B cell (primary cell): ENCODE measurements at regions of chr10 and their contacts with region 1.

Region 1: DNA sequence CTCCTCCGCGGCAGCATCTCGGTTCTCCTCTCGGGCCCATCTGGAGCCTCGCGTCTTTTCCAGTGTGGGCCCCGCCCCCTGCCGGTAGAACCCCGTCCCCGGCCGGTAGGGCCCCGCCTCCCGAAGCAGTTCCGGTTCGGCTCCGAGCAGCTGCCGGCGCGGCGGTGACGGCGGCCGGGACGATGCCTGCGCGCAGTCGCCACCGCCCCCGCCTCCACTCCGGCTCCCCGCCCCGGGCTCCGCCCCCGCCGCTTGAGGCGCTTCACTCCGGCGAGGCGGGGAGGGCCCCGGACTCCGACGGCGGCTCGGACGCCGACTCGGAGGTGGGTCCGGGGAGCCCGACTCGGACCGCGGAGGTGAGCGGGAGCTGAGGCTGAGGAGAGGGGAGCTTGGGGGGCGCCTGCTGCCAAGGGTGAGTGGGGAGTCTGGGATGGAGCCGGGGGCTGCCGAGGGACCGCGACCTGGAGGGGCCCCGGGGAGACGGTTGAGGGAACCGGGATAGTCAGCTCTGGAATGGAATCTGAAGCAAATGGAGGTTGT is at the start of gene SAMD8:
- DNase-seq: peak; percentile 98
- ATAC-seq: peak; percentile 84
- H3K4me3 ChIP-seq: peak within 1 kb of the TSS; percentile 73 to 100 (median 91)
- H3K4me3 Mint-ChIP-seq: peak within 1 kb of the TSS; percentile 89
- H3K27ac ChIP-seq: peak within 1 kb of the TSS; percentile 98
- H3K27ac Mint-ChIP-seq: peak within 1 kb of the TSS; percentile 90
- H3K4me1 ChIP-seq: peaks cover 18 to 24% of the 10 kb centered on the region in 2 donors
- H3K4me1 Mint-ChIP-seq: peaks cover 44% of the 10 kb centered on the region
- H3K27me3 ChIP-seq: no peaks in the 10 kb centered on the region
- H3K27me3 Mint-ChIP-seq: no peaks in the 10 kb centered on the region
- CTCF ChIP-seq: peak; percentile 34
- total RNA-seq, gene SAMD8: 31.7 and 35.7 TPM in 2 replicates

Region 2: DNA sequence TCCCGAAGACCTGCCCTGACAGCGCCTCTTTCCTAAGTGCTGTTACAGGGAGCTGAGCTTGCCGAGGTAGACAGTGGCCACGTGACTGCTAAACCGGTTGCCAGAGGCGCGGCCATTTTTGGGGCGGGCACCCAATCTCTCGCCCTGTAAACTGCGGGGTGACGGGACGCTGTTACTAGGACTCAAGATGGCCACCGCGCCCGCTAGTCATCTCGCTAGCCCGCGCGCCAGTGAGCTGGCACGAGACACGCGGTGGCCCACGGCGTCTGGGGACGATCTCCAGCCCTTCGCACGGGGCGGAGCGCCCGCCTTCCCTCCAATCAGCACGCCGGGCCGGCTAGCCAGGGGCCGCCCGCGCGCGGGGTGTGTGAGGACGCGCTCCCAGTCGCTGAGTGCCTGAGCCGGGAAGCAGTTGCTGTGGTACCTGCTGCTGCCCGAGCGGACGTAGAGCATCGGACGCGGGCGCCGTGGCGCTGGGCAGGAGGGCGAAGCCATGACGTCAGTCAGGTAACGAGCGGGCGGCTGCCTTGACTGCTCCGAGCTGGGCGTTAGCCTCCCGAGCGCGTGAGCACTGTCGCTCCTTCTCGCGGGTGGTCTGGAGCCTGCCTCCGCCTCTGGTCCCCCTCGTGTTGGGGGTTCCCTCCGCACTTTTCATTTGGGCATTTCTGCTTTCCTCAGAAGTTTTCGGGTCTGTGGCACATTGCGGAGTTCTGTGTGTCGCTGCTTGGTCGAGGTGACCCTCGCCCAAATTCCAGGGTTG is 934.9 kb before region 1 on chr10:
- CTCF ChIA-PET with region 1: no interaction called
- POLR2A ChIA-PET with region 1: no interaction called
- intact Hi-C with region 1: loop called (anchors 1 kb)
- DNase-seq: peak; percentile 98
- ATAC-seq: peak; percentile 90
- H3K4me3 ChIP-seq: peak overlapping the region; percentile 85 to 96 (median 95)
- H3K4me3 Mint-ChIP-seq: peak overlapping the region; percentile 97
- H3K27ac ChIP-seq: peak overlapping the region; percentile 92 to 95
- H3K27ac Mint-ChIP-seq: peak overlapping the region; percentile 98
- H3K4me1 ChIP-seq: peaks cover 39 to 56% of the 10 kb centered on the region in 2 donors
- H3K4me1 Mint-ChIP-seq: peaks cover 55% of the 10 kb centered on the region
- H3K27me3 ChIP-seq: no peaks in the 10 kb centered on the region
- H3K27me3 Mint-ChIP-seq: no peaks in the 10 kb centered on the region
- CTCF ChIP-seq: no peak

Region 3: GRCh38 chr10:75079436-75080083 is 31.9 kb before region 1 on chr10:
- CTCF ChIA-PET with region 1: no interaction called
- POLR2A ChIA-PET with region 1: no interaction called
- intact Hi-C with region 1: no loop called
- DNase-seq: no peak
- ATAC-seq: no peak
- H3K4me3 ChIP-seq: no peak overlapping the region
- H3K4me3 Mint-ChIP-seq: no peak overlapping the region
- H3K27ac ChIP-seq: no peak overlapping the region
- H3K27ac Mint-ChIP-seq: no peak overlapping the region
- H3K4me1 ChIP-seq: no peaks in the 10 kb centered on the region
- H3K4me1 Mint-ChIP-seq: no peaks in the 10 kb centered on the region
- H3K27me3 ChIP-seq: no peaks in the 10 kb centered on the region
- H3K27me3 Mint-ChIP-seq: no peaks in the 10 kb centered on the region
- CTCF ChIP-seq: no peak

Region 4: DNA sequence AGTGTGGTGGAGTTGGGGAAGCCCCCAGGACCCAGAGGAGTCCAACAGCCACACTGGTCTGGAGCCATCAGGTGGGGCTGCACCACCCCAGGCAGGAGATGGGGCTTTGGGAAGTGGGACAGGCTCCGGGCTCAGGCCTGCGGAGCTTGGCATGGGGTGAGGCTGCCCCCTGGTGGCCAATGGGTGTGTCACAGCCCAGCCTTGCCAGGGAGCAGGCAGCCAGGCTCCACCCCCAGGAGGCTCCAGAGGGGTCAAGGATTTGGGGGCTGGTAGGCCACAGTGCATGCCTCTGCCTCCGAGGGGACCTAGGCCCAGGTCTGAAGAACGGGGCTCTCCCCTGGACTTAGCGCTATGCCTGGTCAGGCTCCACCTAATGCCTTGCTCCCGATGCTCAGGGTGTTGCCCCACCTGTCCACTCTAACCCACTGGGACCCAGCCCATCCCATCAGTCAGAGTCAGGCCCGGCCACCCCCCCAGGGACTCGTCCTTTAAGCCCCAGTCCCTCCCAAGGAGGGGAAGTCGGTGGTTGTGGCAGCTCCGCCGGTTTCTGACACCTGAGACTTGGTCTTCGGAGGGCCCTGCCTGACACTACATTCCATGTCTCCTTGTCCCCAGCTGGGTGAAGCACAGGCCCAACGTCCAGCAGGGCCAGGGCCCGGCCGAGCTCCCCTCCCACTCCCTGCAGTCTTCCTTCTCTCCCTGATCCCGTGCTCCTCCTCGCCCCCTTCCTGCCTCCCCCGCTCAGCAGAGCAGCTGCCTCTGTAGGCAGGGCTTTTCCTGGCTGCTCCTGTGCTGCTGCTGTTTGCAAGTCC is 11.3 kb before region 1 on chr10:
- CTCF ChIA-PET with region 1: interaction called, 10 read pairs
- POLR2A ChIA-PET with region 1: no interaction called
- intact Hi-C with region 1: no loop called
- DNase-seq: peak; percentile 83
- ATAC-seq: peak; percentile 98
- H3K4me3 ChIP-seq: no peak overlapping the region
- H3K4me3 Mint-ChIP-seq: no peak overlapping the region
- H3K27ac ChIP-seq: no peak overlapping the region
- H3K27ac Mint-ChIP-seq: no peak overlapping the region
- H3K4me1 ChIP-seq: peaks cover 0 to 7% of the 10 kb centered on the region in 2 donors
- H3K4me1 Mint-ChIP-seq: no peaks in the 10 kb centered on the region
- H3K27me3 ChIP-seq: no peaks in the 10 kb centered on the region
- H3K27me3 Mint-ChIP-seq: no peaks in the 10 kb centered on the region
- CTCF ChIP-seq: peak; percentile 100

Region 5: DNA sequence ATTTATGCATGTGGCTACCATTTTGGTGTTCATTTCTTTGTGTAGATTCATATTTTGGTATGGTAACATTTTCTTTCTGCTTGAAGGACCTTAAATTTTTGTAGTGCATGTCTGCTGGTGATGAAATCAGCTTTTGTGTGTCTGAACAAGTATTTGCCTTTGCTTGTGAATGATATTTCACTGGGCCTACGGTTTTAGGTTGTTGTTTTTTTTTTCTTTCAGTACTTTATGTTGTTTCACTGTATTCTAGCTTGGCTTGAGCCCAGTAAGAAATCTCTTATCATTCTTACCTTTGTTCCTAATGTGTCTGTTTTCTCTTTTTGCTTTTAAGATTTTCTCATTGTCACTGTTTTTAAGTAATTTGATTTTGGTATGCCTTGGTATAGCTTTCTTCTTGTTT is 31.9 kb after region 1 on chr10:
- CTCF ChIA-PET with region 1: no interaction called
- POLR2A ChIA-PET with region 1: no interaction called
- intact Hi-C with region 1: loop called (anchors 1 kb)
- DNase-seq: no peak
- ATAC-seq: no peak
- H3K4me3 ChIP-seq: no peak overlapping the region
- H3K4me3 Mint-ChIP-seq: no peak overlapping the region
- H3K27ac ChIP-seq: peak overlapping the region in 1 of 2 donors; percentile 39
- H3K27ac Mint-ChIP-seq: no peak overlapping the region
- H3K4me1 ChIP-seq: peaks cover 18 to 23% of the 10 kb centered on the region in 2 donors
- H3K4me1 Mint-ChIP-seq: peaks cover 46% of the 10 kb centered on the region
- H3K27me3 ChIP-seq: no peaks in the 10 kb centered on the region
- H3K27me3 Mint-ChIP-seq: no peaks in the 10 kb centered on the region
- CTCF ChIP-seq: no peak

Region 6: DNA sequence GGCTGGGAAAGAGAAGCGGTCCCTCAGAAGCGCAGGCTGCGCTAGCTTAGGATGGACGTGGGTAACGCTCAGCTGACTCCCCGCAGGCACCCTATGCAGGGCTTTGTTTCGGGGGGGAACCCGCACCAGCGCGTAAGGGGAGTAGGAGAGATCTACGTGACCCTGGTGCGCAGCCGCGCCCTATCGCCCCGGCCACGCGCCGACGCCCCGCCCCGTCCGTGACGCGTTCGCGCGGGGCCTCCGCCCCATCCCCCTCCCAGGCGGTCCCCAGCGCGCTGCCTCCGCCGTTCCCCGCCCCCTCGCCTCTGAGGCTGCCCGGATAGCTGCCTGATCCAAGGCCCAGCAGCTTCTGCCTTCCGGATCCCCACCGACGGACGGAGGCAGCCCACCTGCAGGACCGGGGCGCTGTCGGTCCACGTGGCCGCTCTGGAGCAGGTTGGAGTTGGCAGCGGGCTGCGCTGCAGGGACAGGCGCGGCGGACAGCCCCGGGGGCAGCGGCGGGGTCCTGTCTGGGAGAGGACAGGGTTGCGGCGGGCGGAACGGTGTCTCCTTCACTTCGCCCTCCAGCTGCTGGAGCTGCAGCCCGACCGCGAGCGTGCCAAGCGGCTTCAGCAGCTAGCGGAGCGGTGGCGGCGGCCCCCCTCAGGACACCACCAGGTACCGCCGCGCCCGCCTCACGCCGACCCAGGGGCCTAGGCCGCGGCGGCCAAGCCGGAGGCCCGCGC is 99.0 kb after region 1 on chr10 and contains the start of gene VDAC2:
- CTCF ChIA-PET with region 1: interaction called, 4 read pairs
- POLR2A ChIA-PET with region 1: interaction called, 8 read pairs
- intact Hi-C with region 1: loop called (anchors 1 kb)
- DNase-seq: peak; percentile 99
- ATAC-seq: peak; percentile 89
- H3K4me3 ChIP-seq: peak within 1 kb of the TSS; percentile 84 to 98 (median 93)
- H3K4me3 Mint-ChIP-seq: peak within 1 kb of the TSS; percentile 95
- H3K27ac ChIP-seq: peak within 1 kb of the TSS; percentile 97 to 100
- H3K27ac Mint-ChIP-seq: peak within 1 kb of the TSS; percentile 98
- H3K4me1 ChIP-seq: peaks cover 12 to 20% of the 10 kb centered on the region in 2 donors
- H3K4me1 Mint-ChIP-seq: peaks cover 24% of the 10 kb centered on the region
- H3K27me3 ChIP-seq: no peaks in the 10 kb centered on the region
- H3K27me3 Mint-ChIP-seq: no peaks in the 10 kb centered on the region
- CTCF ChIP-seq: no peak
- total RNA-seq, gene VDAC2: 83.6 and 86.4 TPM in 2 replicates